CD8-positive, alpha-beta T cell (primary cell): ENCODE measurements at regions of chr14 and their contacts with region 1.

Region 1: GRCh38 chr14:99683619-99684355 is at the start of gene CYP46A1:
- DNase-seq: peak; percentile 99 to 100 (median 99)
- ATAC-seq: peak; percentile 95
- H3K4me3 ChIP-seq: peak within 1 kb of the TSS; percentile 83 to 93
- H3K4me3 Mint-ChIP-seq: peak within 1 kb of the TSS; percentile 96
- H3K27ac ChIP-seq: peak within 1 kb of the TSS; percentile 69 to 84
- H3K27ac Mint-ChIP-seq: peak within 1 kb of the TSS; percentile 77
- H3K4me1 ChIP-seq: peaks cover 8% of the 10 kb centered on the region
- H3K4me1 Mint-ChIP-seq: peaks cover 14% of the 10 kb centered on the region
- H3K27me3 ChIP-seq: peaks cover 0 to 10% of the 10 kb centered on the region in 2 experiments
- H3K27me3 Mint-ChIP-seq: peaks cover 7% of the 10 kb centered on the region
- CTCF ChIP-seq: no peak
- total RNA-seq, gene CYP46A1: 0.19 to 0.30 TPM

Region 2: GRCh38 chr14:99480917-99481744 is 202.7 kb before region 1 on chr14 and contains the start of gene CCNK:
- CTCF ChIA-PET with region 1: no interaction called
- POLR2A ChIA-PET with region 1: interaction called, 6 read pairs
- intact Hi-C with region 1: loop called in 1 of 2 experiments (anchors 1 kb)
- DNase-seq: peak; percentile 100
- ATAC-seq: peak; percentile 87
- H3K4me3 ChIP-seq: peak within 1 kb of the TSS; percentile 97 to 99
- H3K4me3 Mint-ChIP-seq: peak within 1 kb of the TSS; percentile 99
- H3K27ac ChIP-seq: peak within 1 kb of the TSS; percentile 95 to 96
- H3K27ac Mint-ChIP-seq: peak within 1 kb of the TSS; percentile 99
- H3K4me1 ChIP-seq: peaks cover 38% of the 10 kb centered on the region
- H3K4me1 Mint-ChIP-seq: peaks cover 60% of the 10 kb centered on the region
- H3K27me3 ChIP-seq: no peaks in the 10 kb centered on the region
- H3K27me3 Mint-ChIP-seq: no peaks in the 10 kb centered on the region
- CTCF ChIP-seq: no peak
- total RNA-seq, gene CCNK: 171 to 177 TPM

Region 3: GRCh38 chr14:99604283-99604765 is 79.5 kb before region 1 on chr14:
- CTCF ChIA-PET with region 1: interaction called, 11 read pairs
- POLR2A ChIA-PET with region 1: interaction called, 4 read pairs
- intact Hi-C with region 1: loop called in 1 of 2 experiments (anchors 1 kb)
- DNase-seq: peak; percentile 91 to 98 (median 94)
- ATAC-seq: peak; percentile 89
- H3K4me3 ChIP-seq: peak overlapping the region; percentile 92 to 98
- H3K4me3 Mint-ChIP-seq: peak overlapping the region; percentile 90
- H3K27ac ChIP-seq: peak overlapping the region; percentile 66 to 73
- H3K27ac Mint-ChIP-seq: peak overlapping the region; percentile 84
- H3K4me1 ChIP-seq: peaks cover 23% of the 10 kb centered on the region
- H3K4me1 Mint-ChIP-seq: peaks cover 27% of the 10 kb centered on the region
- H3K27me3 ChIP-seq: no peaks in the 10 kb centered on the region
- H3K27me3 Mint-ChIP-seq: no peaks in the 10 kb centered on the region
- CTCF ChIP-seq: no peak

Region 4: DNA sequence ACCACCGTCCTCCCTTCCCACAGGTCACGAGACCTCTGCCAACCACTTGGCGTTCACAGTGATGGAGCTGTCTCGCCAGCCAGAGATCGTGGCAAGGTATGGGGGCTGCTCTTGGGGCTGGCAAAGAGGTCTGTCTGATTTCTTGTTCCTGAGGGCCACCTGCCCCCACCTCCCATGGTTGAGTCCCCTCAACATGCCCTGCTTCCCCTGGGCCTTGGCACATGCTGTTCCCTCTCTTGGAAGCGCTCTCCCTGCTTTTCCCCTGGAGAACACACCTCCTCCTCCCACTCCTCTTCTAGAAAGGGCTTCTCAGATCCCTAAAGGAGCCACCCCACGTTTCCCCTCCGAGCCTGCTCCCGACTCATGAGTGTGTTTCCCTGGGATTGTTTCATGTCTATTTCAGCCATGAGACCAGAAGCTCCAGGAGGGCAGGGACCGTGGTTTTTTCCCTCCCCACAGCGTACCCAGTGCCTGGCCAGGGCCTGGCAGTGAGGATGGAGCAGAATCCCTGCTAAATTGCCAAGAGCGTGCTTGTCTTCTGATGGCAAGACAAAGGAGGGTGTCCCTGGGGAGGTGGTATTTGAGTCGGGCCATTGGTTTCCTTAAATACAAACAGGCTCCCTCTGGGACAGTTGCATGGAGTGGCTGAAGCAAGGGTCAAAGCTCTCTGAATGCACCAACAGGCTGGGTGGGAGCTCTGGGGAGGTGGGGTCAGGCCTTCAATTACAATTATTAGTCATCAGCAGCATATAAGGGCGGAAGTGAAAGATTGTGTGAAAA is 34.4 kb after region 1 on chr14:
- CTCF ChIA-PET with region 1: no interaction called
- POLR2A ChIA-PET with region 1: no interaction called
- intact Hi-C with region 1: no loop called
- DNase-seq: peak in 2 of 9 experiments; percentile 6 to 25
- ATAC-seq: no peak
- H3K4me3 ChIP-seq: no peak overlapping the region
- H3K4me3 Mint-ChIP-seq: no peak overlapping the region
- H3K27ac ChIP-seq: no peak overlapping the region
- H3K27ac Mint-ChIP-seq: no peak overlapping the region
- H3K4me1 ChIP-seq: no peaks in the 10 kb centered on the region
- H3K4me1 Mint-ChIP-seq: no peaks in the 10 kb centered on the region
- H3K27me3 ChIP-seq: no peaks in the 10 kb centered on the region
- H3K27me3 Mint-ChIP-seq: peaks cover 6% of the 10 kb centered on the region
- CTCF ChIP-seq: no peak

Region 5: GRCh38 chr14:99755629-99756603 is 72.1 kb after region 1 on chr14:
- CTCF ChIA-PET with region 1: no interaction called
- POLR2A ChIA-PET with region 1: no interaction called
- intact Hi-C with region 1: no loop called
- DNase-seq: no peak
- ATAC-seq: no peak
- H3K4me3 ChIP-seq: no peak overlapping the region
- H3K4me3 Mint-ChIP-seq: no peak overlapping the region
- H3K27ac ChIP-seq: no peak overlapping the region
- H3K27ac Mint-ChIP-seq: no peak overlapping the region
- H3K4me1 ChIP-seq: peaks cover 13% of the 10 kb centered on the region
- H3K4me1 Mint-ChIP-seq: peaks cover 15% of the 10 kb centered on the region
- H3K27me3 ChIP-seq: peaks cover 5 to 16% of the 10 kb centered on the region in 2 experiments
- H3K27me3 Mint-ChIP-seq: peaks cover 32% of the 10 kb centered on the region
- CTCF ChIP-seq: no peak

Region 6: DNA sequence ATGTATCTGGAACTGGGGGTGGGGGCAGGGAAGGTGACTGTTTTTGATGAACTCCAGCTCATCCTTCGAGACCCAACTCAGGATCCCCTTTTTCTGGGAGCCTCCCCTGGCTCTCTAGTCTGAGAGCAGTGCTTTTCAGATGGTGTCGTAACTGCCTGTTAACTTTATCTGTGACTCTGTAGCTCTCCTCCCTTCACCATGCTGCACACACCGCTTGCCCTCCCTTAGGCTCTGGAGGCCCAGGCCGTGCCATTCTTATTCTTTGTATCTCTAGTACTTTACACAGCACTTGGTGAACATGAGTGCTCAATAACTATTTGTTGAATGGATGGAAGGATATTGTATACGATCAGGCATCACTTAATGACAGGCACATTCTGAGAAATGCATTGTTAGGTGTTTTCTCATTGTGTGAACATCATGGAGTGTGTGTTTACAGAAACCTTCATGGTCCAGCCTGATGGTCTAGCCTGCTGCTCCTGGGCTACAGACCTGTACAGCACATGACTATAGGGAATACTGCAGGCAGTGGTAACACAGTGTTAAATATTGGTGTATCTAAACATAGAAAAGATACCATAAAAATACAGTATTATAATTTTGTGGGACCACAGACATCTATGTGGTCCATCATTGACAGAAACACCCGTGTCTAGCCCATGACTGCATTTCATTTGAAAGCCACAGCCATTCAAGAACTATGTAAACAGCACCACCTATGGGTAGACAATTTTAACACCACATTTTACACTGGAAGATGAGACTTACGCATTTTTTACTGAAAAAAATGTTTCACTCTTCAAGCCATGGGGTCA is 201.3 kb after region 1 on chr14:
- CTCF ChIA-PET with region 1: interaction called, 4 read pairs
- POLR2A ChIA-PET with region 1: no interaction called
- intact Hi-C with region 1: loop called in 1 of 2 experiments (anchors 1 kb)
- DNase-seq: peak in 4 of 9 experiments; percentile 11 to 74 (median 40)
- ATAC-seq: peak; percentile 51
- H3K4me3 ChIP-seq: no peak overlapping the region
- H3K4me3 Mint-ChIP-seq: no peak overlapping the region
- H3K27ac ChIP-seq: no peak overlapping the region
- H3K27ac Mint-ChIP-seq: no peak overlapping the region
- H3K4me1 ChIP-seq: no peaks in the 10 kb centered on the region
- H3K4me1 Mint-ChIP-seq: no peaks in the 10 kb centered on the region
- H3K27me3 ChIP-seq: peaks cover 0 to 3% of the 10 kb centered on the region in 2 experiments
- H3K27me3 Mint-ChIP-seq: peaks cover 8% of the 10 kb centered on the region
- CTCF ChIP-seq: peak; percentile 93

Region 7: DNA sequence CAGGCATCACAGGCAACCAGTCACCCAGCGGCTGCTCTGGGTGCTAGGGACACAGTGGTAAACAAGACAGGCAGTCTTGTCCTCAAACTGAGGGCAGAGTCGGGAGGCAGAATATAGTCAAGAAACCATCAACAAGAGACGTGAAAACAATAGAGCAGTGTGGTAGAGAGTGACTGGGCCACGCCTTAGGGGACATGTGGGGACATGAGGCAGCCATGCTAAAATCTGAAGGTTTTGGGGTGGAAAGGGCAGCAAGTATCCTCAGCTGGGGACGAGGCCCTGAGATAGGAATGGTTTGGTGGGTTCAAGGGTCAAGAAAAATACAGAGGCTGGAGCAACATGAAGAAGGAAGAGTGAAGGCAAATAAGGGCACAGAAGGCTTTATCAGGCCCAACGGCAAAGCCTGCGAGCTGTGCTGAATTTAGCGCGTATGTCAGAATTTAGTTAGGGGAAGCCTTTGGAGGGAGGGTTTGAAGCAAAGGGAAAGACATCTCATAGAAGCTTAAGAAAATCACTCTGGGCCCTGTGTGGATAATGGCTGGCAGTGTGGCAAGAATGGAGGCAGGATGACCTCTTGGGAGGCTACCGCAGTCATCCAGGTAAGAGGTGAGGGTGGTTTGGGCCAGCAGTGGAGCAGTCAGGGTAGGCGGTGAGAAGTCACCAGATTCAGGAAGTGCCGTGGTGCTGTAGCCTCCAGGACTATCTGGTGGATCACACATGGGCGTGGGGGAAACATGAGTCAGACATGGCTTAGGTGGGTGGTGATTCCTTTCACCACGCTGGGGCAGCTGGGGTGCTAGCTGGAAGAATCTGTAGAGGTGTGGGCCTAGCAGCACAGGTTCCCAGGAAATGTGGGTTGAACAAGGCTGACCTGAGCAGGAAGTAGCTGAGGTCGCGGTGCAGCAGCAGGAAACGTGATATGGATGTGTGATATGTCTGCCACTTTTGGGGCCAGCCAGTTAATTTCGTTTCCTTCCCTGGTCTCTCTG is 384.5 kb after region 1 on chr14:
- CTCF ChIA-PET with region 1: no interaction called
- POLR2A ChIA-PET with region 1: no interaction called
- intact Hi-C with region 1: loop called in 1 of 2 experiments (anchors 5 kb)
- DNase-seq: peak; percentile 70 to 98 (median 88)
- ATAC-seq: peak; percentile 50
- H3K4me3 ChIP-seq: peak overlapping the region; percentile 73 to 85
- H3K4me3 Mint-ChIP-seq: peak overlapping the region; percentile 100
- H3K27ac ChIP-seq: peak overlapping the region; percentile 83 to 87
- H3K27ac Mint-ChIP-seq: peak overlapping the region; percentile 99
- H3K4me1 ChIP-seq: peaks cover 59% of the 10 kb centered on the region
- H3K4me1 Mint-ChIP-seq: peaks cover 82% of the 10 kb centered on the region
- H3K27me3 ChIP-seq: no peaks in the 10 kb centered on the region
- H3K27me3 Mint-ChIP-seq: no peaks in the 10 kb centered on the region
- CTCF ChIP-seq: no peak

Region 8: GRCh38 chr14:100239840-100240724 is 556.3 kb after region 1 on chr14:
- CTCF ChIA-PET with region 1: no interaction called
- POLR2A ChIA-PET with region 1: no interaction called
- intact Hi-C with region 1: loop called in 1 of 2 experiments (anchors 5 kb)
- DNase-seq: peak; percentile 68 to 92 (median 84)
- ATAC-seq: peak; percentile 36
- H3K4me3 ChIP-seq: peak overlapping the region; percentile 66 to 77
- H3K4me3 Mint-ChIP-seq: peak overlapping the region; percentile 90
- H3K27ac ChIP-seq: peak overlapping the region; percentile 56 to 85
- H3K27ac Mint-ChIP-seq: peak overlapping the region; percentile 94
- H3K4me1 ChIP-seq: peaks cover 56% of the 10 kb centered on the region
- H3K4me1 Mint-ChIP-seq: peaks cover 59% of the 10 kb centered on the region
- H3K27me3 ChIP-seq: no peaks in the 10 kb centered on the region
- H3K27me3 Mint-ChIP-seq: no peaks in the 10 kb centered on the region
- CTCF ChIP-seq: peak; percentile 54

Region 9: GRCh38 chr14:100547633-100548294 is 864.0 kb after region 1 on chr14:
- CTCF ChIA-PET with region 1: no interaction called
- POLR2A ChIA-PET with region 1: no interaction called
- intact Hi-C with region 1: loop called (anchors 5 to 10 kb)
- DNase-seq: peak; percentile 8 to 91 (median 51)
- ATAC-seq: peak; percentile 52
- H3K4me3 ChIP-seq: peak overlapping the region in 1 of 2 experiments; percentile 68
- H3K4me3 Mint-ChIP-seq: peak overlapping the region; percentile 57
- H3K27ac ChIP-seq: peak overlapping the region; percentile 64 to 67
- H3K27ac Mint-ChIP-seq: peak overlapping the region; percentile 88
- H3K4me1 ChIP-seq: peaks cover 36% of the 10 kb centered on the region
- H3K4me1 Mint-ChIP-seq: peaks cover 24% of the 10 kb centered on the region
- H3K27me3 ChIP-seq: no peaks in the 10 kb centered on the region
- H3K27me3 Mint-ChIP-seq: no peaks in the 10 kb centered on the region
- CTCF ChIP-seq: no peak